ENCODE measurements at regions of chrX and their contacts with region 1.

Region 1: DNA sequence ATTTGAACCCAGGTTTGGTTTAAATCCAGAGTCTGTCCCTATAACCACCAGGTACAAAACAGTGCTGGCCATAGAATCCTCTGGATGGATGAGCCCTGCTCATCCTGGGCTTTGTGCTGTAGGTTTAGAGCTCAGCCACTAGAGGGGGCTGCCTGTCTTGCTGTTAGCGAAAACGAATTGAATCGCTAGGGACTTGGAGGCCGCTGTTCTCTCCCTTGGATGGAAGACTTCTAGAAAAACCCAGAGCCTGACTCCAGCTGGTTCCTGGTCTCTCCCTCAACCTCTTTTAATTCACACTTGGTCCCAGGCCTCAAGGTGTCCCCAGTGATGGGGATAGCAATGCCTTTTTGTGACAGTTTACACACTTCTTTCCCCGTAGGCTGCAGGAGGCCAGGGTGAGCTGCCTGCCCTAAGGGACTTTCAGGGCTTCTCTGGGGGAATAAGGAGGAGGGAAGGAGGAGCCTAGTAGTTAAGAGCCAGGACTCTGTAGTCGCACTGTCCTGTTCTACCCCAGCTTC is 8.7 kb downstream of the RIPPLY1 start:
- DNase-seq: peak; percentile 79
- H3K4me3 Mint-ChIP-seq: no peak overlapping the region
- H3K27ac Mint-ChIP-seq: no peak overlapping the region
- H3K4me1 Mint-ChIP-seq: no peaks in the 10 kb centered on the region
- H3K27me3 Mint-ChIP-seq: no peaks in the 10 kb centered on the region

Region 2: DNA sequence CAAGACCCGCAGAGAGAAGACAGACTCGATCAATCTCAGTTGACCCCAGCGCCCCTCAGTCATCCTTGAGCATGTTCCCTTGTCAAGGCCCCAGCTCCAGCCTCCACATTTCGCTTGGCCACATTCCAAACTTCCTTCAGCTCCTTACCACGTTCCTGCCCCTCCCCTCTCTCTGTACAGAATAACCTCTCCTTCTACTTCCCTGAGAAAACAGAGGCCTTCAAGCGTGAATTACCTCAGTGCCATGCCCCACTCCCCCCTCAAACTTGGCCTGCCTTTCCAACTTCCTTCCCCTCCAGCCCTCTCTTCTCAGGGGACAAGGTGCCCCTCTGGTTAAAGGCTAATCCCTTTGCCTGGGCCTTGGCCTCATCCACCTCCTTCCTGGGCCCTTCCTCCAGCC is 11.9 kb after region 1 on chrX:
- intact Hi-C with region 1: no loop called
- DNase-seq: no peak
- H3K4me3 Mint-ChIP-seq: no peak overlapping the region
- H3K27ac Mint-ChIP-seq: no peak overlapping the region
- H3K4me1 Mint-ChIP-seq: no peaks in the 10 kb centered on the region
- H3K27me3 Mint-ChIP-seq: no peaks in the 10 kb centered on the region

Region 3: DNA sequence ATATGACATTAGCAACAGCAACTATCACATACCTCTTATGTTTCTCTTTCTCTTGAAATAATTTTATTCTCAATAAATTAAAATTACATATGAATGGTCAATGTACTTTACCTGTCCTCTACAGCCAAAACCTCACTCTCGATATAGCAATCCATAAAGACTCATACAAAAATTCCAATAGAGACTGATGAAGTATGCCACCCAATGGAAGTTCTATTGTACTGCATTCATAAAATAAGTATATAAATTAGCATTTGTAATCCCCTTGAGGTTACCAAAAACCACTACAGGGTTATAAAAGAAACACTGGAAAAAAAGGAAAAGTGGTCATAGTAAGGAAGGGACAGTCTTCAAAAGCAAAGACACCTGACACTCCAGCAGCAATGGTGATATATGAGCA is 58.5 kb after region 1 on chrX:
- intact Hi-C with region 1: loop called (anchors 1 kb)
- DNase-seq: no peak
- H3K4me3 Mint-ChIP-seq: no peak overlapping the region
- H3K27ac Mint-ChIP-seq: no peak overlapping the region
- H3K4me1 Mint-ChIP-seq: no peaks in the 10 kb centered on the region
- H3K27me3 Mint-ChIP-seq: no peaks in the 10 kb centered on the region

Region 4: DNA sequence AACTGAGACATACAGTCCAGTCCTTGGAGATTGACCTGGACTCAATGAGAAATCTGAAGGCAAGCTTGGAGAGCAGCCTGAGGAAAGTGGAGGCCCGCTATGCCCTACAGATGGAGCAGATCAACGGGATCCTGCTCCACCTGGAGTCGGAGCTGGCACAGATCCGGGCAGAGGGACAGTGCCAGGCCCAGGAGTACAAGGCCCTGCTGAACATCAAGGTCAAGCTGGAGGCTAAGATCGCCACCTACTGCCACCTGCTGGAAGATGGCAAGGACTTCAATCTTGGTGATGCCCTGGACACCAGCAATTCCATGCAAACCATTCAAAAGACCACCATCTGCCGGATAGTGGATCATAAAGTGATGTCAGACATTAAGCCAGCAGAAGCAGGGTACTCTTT is 534.6 kb after region 1 on chrX:
- intact Hi-C with region 1: loop called (anchors 5 kb)
- DNase-seq: peak; percentile 70
- H3K4me3 Mint-ChIP-seq: no peak overlapping the region
- H3K27ac Mint-ChIP-seq: no peak overlapping the region
- H3K4me1 Mint-ChIP-seq: no peaks in the 10 kb centered on the region
- H3K27me3 Mint-ChIP-seq: peaks cover 7% of the 10 kb centered on the region

Region 5: DNA sequence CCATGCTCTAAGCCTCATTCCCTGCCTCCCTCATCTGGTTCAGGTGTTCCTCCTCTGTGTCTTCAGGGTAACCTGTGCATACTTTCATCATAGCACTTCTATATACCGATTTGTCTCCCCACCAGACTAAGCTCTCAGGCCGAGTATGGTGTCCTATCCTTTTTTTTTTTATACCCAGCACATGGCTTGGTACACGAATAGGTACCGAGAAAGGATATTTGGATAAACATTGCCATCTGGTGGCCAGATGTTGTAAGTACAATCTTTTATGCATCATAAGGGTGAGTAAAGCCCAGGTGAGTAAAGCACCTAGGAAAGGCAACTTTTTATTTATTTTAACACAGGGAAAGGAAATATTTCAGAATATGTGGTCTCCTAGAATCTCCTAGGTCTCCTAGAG is 999.6 kb after region 1 on chrX:
- intact Hi-C with region 1: loop called (anchors 10 kb)
- DNase-seq: peak; percentile 80
- H3K4me3 Mint-ChIP-seq: no peak overlapping the region
- H3K27ac Mint-ChIP-seq: no peak overlapping the region
- H3K4me1 Mint-ChIP-seq: no peaks in the 10 kb centered on the region
- H3K27me3 Mint-ChIP-seq: peaks cover 2% of the 10 kb centered on the region